AG04450 (cell line): ENCODE measurements at regions of chr11 and their contacts with region 1.

Region 1: DNA sequence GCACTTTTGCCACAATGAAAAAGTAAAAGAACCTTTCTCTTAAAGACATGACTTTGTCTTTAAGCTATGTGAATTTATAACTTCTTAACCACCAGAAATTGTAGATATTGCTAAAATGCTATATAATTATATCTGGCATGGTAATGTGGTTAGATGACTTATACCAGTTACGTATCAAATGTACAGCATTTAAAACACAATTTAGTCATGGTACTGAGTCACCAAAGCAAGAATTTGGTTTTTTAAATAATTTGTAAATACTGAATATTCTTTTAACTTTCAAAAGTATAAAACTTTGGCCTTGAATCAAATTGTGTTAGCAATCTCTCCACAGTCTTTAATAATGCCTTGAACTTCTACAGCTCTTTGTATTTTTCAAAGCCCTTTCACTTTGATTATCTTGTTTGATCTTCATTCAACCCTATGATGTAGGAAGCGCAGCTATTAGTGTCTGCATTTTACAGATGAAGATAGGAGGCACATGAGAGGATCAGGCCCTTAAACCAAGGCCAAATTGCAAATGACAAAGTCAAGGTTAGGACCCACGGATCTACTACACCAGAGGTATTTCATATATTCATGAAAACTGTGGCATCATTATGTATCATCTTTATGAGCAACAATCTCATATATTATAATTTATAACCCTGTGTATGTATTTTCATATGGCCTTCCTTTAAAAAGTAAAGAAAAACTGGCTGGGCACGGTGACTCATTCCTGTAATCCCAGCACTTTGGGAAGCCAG is 4.4 kb upstream of the SYTL2 start:
- DNase-seq: peak; percentile 66
- H3K4me3 ChIP-seq: no peak overlapping the region
- H3K27ac ChIP-seq: peak overlapping the region; percentile 81
- H3K27me3 ChIP-seq: no peaks in the 10 kb centered on the region
- CTCF ChIP-seq: no peak

Region 2: GRCh38 chr11:85359859-85360258 is 455.5 kb before region 1 on chr11:
- CTCF ChIA-PET with region 1: no interaction called
- POLR2A ChIA-PET with region 1: no interaction called
- DNase-seq: no peak
- H3K4me3 ChIP-seq: no peak overlapping the region
- H3K27ac ChIP-seq: no peak overlapping the region
- H3K27me3 ChIP-seq: no peaks in the 10 kb centered on the region
- CTCF ChIP-seq: no peak

Region 3: DNA sequence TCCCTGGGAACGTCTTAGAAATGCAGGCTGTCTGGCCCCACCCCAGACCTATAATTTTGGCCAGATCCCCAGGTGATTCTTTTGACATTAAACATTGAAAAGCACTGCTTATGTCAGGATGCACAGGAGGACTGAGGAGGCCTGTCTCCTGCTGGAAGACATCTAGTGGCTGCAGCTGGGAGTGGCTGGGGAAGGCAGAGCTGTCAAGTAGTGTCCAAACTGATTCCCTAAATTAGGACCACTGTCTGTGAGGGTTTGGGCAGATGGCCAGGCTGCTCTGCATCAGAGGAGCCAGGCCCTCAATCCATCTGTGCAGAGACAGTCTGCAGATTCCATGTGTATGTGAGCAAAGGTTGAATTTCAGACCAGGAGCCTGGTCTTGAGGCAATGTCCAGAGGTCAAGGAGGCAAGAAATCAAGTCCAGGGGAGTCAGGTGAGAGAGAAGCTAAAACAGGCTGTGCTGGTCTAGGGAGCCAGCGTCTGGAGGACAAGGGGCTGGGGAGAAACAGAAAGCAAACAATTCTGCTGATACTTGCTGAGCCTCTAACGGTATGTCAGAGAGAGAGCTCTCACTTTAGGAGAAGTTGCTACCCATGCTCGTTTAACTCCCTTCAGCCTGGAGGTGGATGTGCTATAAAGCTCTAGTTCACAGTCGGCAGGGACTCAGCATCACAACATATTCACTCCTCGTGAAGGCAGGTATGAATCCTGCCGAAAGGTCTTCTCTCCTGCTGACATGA is 10.9 kb after region 1 on chr11:
- CTCF ChIA-PET with region 1: interaction called, 9 read pairs
- POLR2A ChIA-PET with region 1: interaction called, 15 read pairs
- DNase-seq: no peak
- H3K4me3 ChIP-seq: no peak overlapping the region
- H3K27ac ChIP-seq: peak overlapping the region; percentile 88
- H3K27me3 ChIP-seq: no peaks in the 10 kb centered on the region
- CTCF ChIP-seq: peak; percentile 72